ENCODE measurements at regions of chr4 and their contacts with region 1.

Region 1: DNA sequence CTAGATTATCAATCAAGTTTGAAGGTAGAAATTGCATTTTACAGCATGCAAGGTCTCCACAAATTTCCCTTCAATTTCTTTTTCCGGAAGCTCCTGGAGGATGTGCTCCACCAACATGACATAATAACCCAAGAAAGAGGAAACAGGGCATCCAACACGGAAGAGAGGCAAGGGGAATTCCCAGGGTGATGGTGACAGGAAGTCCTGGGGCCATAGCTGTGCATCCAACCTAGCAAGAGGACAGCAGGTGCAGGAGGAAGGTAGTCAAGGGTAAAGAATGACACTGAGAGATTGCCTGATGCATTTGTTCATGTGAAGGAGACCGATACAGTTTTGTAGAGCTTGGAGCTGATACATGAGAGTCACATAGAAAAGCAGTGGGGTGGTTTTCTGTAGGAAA is 115.7 kb upstream of the LSM6 start:
- DNase-seq: peak; percentile 45
- ATAC-seq: peak; percentile 91
- H3K4me3 Mint-ChIP-seq: no peak overlapping the region
- H3K27ac Mint-ChIP-seq: no peak overlapping the region
- H3K4me1 Mint-ChIP-seq: peaks cover 39% of the 10 kb centered on the region
- H3K27me3 Mint-ChIP-seq: no peaks in the 10 kb centered on the region
- CTCF ChIP-seq: no peak

Region 2: GRCh38 chr4:145732895-145733880 is 326.7 kb before region 1 on chr4:
- CTCF ChIA-PET with region 1: no interaction called
- POLR2A ChIA-PET with region 1: no interaction called
- intact Hi-C with region 1: loop called (anchors 10 kb)
- DNase-seq: peak; percentile 72
- ATAC-seq: peak; percentile 97
- H3K4me3 Mint-ChIP-seq: peak overlapping the region; percentile 85
- H3K27ac Mint-ChIP-seq: no peak overlapping the region
- H3K4me1 Mint-ChIP-seq: peaks cover 11% of the 10 kb centered on the region
- H3K27me3 Mint-ChIP-seq: peaks cover 10% of the 10 kb centered on the region
- CTCF ChIP-seq: no peak

Region 3: GRCh38 chr4:146049802-146050201 is 10.1 kb before region 1 on chr4:
- CTCF ChIA-PET with region 1: interaction called, 4 read pairs
- POLR2A ChIA-PET with region 1: interaction called, 81 read pairs
- intact Hi-C with region 1: loop called (anchors 1 kb)
- DNase-seq: no peak
- ATAC-seq: peak; percentile 90
- H3K4me3 Mint-ChIP-seq: peak overlapping the region; percentile 50
- H3K27ac Mint-ChIP-seq: peak overlapping the region; percentile 81
- H3K4me1 Mint-ChIP-seq: peaks cover 73% of the 10 kb centered on the region
- H3K27me3 Mint-ChIP-seq: no peaks in the 10 kb centered on the region
- CTCF ChIP-seq: no peak

Region 4: DNA sequence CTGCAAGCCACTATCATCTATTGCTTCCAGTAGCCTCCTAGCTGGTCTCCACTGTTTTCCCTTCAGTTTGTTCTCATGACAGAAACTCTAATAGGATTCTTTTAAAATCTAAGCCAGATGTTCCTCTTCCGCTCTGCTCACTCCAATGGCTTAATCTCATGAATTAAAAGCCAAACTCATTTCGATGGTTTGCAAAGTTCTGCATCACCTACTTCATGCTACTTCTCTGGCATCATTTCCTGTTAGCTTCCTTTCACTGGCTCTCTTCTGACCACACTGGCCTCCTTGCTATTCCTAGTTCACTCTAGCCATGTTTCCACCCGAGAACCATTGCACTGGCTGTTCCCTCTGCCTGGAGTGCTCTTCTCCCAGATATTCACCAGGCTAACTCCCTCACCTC is 13.7 kb after region 1 on chr4:
- CTCF ChIA-PET with region 1: no interaction called
- POLR2A ChIA-PET with region 1: interaction called, 4 read pairs
- intact Hi-C with region 1: loop called (anchors 2 kb)
- DNase-seq: no peak
- ATAC-seq: peak; percentile 37
- H3K4me3 Mint-ChIP-seq: no peak overlapping the region
- H3K27ac Mint-ChIP-seq: no peak overlapping the region
- H3K4me1 Mint-ChIP-seq: no peaks in the 10 kb centered on the region
- H3K27me3 Mint-ChIP-seq: peaks cover 4% of the 10 kb centered on the region
- CTCF ChIP-seq: no peak

Region 5: GRCh38 chr4:146095091-146095690 is 35.3 kb after region 1 on chr4:
- CTCF ChIA-PET with region 1: interaction called, 6 read pairs
- POLR2A ChIA-PET with region 1: interaction called, 4 read pairs
- intact Hi-C with region 1: loop called (anchors 5 kb)
- DNase-seq: no peak
- ATAC-seq: no peak
- H3K4me3 Mint-ChIP-seq: no peak overlapping the region
- H3K27ac Mint-ChIP-seq: no peak overlapping the region
- H3K4me1 Mint-ChIP-seq: peaks cover 14% of the 10 kb centered on the region
- H3K27me3 Mint-ChIP-seq: no peaks in the 10 kb centered on the region
- CTCF ChIP-seq: no peak

Region 6: DNA sequence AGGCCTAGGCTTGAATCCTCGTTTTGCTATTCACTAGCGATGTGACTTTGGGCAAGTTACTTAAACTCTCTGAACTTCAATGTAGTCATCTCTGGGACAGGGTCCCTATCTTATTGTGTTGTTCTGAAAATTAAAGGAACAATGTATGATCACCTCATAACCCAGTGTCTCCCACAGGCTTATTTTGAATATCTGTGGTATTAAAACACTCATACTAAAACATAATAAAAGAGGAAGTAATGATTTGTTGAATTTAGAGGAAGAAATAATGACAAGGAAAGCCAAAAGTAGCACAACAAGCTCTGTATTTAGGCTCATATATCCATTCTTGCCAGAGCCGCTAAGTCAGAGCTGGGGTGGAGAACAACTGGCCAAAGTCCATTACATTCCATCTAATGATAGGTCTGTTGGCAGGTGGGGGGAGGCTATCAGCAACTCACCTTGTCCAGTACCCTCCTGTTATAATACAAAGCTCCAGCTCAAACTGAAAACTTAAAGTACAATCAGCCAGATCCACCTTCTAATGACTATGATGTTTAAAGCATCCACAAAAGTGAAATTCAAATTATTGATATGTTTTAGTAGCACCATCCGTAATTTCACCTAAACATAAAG is 51.1 kb after region 1 on chr4:
- CTCF ChIA-PET with region 1: no interaction called
- POLR2A ChIA-PET with region 1: interaction called, 8 read pairs
- intact Hi-C with region 1: loop called (anchors 1 kb)
- DNase-seq: no peak
- ATAC-seq: peak; percentile 88
- H3K4me3 Mint-ChIP-seq: peak overlapping the region; percentile 33
- H3K27ac Mint-ChIP-seq: peak overlapping the region; percentile 63
- H3K4me1 Mint-ChIP-seq: peaks cover 34% of the 10 kb centered on the region
- H3K27me3 Mint-ChIP-seq: no peaks in the 10 kb centered on the region
- CTCF ChIP-seq: no peak

Region 7: GRCh38 chr4:146175541-146176453 is 115.9 kb after region 1 on chr4 and contains the start of gene LSM6:
- CTCF ChIA-PET with region 1: no interaction called
- POLR2A ChIA-PET with region 1: interaction called, 8 read pairs
- intact Hi-C with region 1: loop called (anchors 2 kb)
- DNase-seq: peak; percentile 75
- ATAC-seq: peak; percentile 93
- H3K4me3 Mint-ChIP-seq: peak within 1 kb of the TSS; percentile 87
- H3K27ac Mint-ChIP-seq: peak within 1 kb of the TSS; percentile 90
- H3K4me1 Mint-ChIP-seq: peaks cover 44% of the 10 kb centered on the region
- H3K27me3 Mint-ChIP-seq: no peaks in the 10 kb centered on the region
- CTCF ChIP-seq: no peak
- total RNA-seq, gene LSM6: 57.4 and 59.7 TPM in 2 replicates

Region 8: DNA sequence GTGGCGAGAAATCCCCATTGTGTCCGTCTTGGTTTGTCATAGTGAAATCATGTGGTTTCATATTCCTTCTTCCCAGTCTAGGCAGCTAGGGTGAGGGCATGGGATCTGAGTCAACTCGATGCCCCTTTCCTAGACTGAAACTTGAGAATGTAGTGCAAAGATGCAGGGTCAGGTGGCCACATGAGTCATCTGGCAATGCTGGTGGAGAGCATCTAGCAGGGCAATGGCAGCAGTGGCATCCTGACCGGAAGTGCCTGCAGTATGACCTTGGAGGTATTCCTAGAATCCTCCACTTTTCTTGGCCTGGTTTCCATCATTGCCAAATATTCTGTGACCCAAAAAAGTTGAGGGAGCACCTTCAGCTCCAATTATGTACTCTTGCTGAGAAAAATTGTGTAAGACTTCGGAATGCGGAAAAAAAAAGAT is 1518.2 kb after region 1 on chr4:
- CTCF ChIA-PET with region 1: no interaction called
- POLR2A ChIA-PET with region 1: no interaction called
- intact Hi-C with region 1: no loop called
- DNase-seq: no peak
- ATAC-seq: no peak
- H3K4me3 Mint-ChIP-seq: no peak overlapping the region
- H3K27ac Mint-ChIP-seq: no peak overlapping the region
- H3K4me1 Mint-ChIP-seq: no peaks in the 10 kb centered on the region
- H3K27me3 Mint-ChIP-seq: peaks cover 6% of the 10 kb centered on the region
- CTCF ChIP-seq: no peak